RWPE1 (cell line): ENCODE measurements at regions of chr5 and their contacts with region 1.

Region 1: GRCh38 chr5:103808464-103809106 is 246.0 kb upstream of the NUDT12 start:
- DNase-seq: peak; percentile 55
- H3K27ac ChIP-seq: no peak overlapping the region
- CTCF ChIP-seq: peak; percentile 97

Region 2: DNA sequence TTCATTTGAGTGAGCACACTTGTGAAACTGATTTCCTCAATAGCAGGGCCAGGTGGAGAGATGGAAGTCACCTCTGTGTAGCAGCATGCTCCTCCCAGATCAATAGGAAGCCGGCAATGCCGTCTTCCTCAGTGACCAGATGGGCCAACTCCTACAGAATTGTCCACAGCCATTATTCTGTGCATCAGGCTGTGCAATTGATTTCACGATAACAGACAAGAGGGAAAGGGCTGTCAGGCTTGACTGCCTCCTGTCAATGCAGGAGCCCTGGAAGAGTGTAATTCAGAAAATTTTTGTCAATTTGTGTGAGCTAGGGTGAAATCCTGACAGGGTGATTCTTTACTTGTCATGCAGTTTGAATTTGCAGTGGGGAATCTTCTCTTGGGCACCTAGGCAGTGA is 592.4 kb after region 1 on chr5:
- CTCF ChIA-PET with region 1: interaction called, 12 read pairs
- POLR2A ChIA-PET with region 1: no interaction called
- DNase-seq: no peak
- H3K27ac ChIP-seq: no peak overlapping the region
- CTCF ChIP-seq: no peak